ENCODE measurements at regions of chr14 and their contacts with region 1.

Region 1: GRCh38 chr14:83975841-83976770 is 1553.8 kb upstream of the FLRT2 start:
- DNase-seq: no peak
- H3K4me3 ChIP-seq: no peak overlapping the region
- H3K4me3 Mint-ChIP-seq: no peak overlapping the region
- H3K27ac Mint-ChIP-seq: no peak overlapping the region
- H3K4me1 ChIP-seq: peaks cover 39% of the 10 kb centered on the region
- H3K4me1 Mint-ChIP-seq: peaks cover 23% of the 10 kb centered on the region
- H3K27me3 ChIP-seq: no peaks in the 10 kb centered on the region
- H3K27me3 Mint-ChIP-seq: no peaks in the 10 kb centered on the region
- CTCF ChIP-seq: no peak

Region 2: GRCh38 chr14:83940253-83940652 is 35.9 kb before region 1 on chr14:
- CTCF ChIA-PET with region 1: no interaction called
- POLR2A ChIA-PET with region 1: no interaction called
- intact Hi-C with region 1: loop called (anchors 5 kb)
- DNase-seq: no peak
- H3K4me3 ChIP-seq: no peak overlapping the region
- H3K4me3 Mint-ChIP-seq: no peak overlapping the region
- H3K27ac Mint-ChIP-seq: no peak overlapping the region
- H3K4me1 ChIP-seq: no peaks in the 10 kb centered on the region
- H3K4me1 Mint-ChIP-seq: no peaks in the 10 kb centered on the region
- H3K27me3 ChIP-seq: no peaks in the 10 kb centered on the region
- H3K27me3 Mint-ChIP-seq: no peaks in the 10 kb centered on the region
- CTCF ChIP-seq: no peak

Region 3: DNA sequence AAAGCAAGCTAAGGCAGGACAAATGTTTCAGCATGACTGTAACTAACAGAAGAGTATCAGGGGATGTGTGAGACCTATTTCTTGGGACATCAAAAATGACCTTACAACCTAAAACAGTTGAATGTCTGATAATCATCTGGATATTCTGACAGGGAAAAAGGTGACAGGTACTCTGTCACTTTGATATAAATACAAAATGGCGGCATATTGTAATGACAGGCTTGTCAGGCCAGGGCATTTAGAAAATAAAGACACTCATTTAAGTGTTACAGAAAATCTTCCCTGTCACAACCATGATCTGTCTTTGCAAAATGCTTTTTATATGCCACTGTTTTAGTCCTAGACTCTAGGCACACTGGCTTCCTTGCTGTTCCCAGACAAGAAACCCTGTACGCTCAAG is 520.6 kb after region 1 on chr14:
- CTCF ChIA-PET with region 1: no interaction called
- POLR2A ChIA-PET with region 1: no interaction called
- intact Hi-C with region 1: no loop called
- DNase-seq: no peak
- H3K4me3 ChIP-seq: no peak overlapping the region
- H3K4me3 Mint-ChIP-seq: no peak overlapping the region
- H3K27ac Mint-ChIP-seq: no peak overlapping the region
- H3K4me1 ChIP-seq: no peaks in the 10 kb centered on the region
- H3K4me1 Mint-ChIP-seq: no peaks in the 10 kb centered on the region
- H3K27me3 ChIP-seq: no peaks in the 10 kb centered on the region
- H3K27me3 Mint-ChIP-seq: no peaks in the 10 kb centered on the region
- CTCF ChIP-seq: no peak